ENCODE measurements at regions of chr13 and their contacts with region 1.

Region 1: GRCh38 chr13:21176220-21176982 is at the starts of genes MRPL57 and SKA3:
- DNase-seq: peak; percentile 84 to 91
- H3K4me3 ChIP-seq: peak within 1 kb of the TSS; percentile 84
- H3K27ac ChIP-seq: peak within 1 kb of the TSS; percentile 81
- H3K4me1 ChIP-seq: peaks cover 15% of the 10 kb centered on the region; the same call in 1 of the 2 replicates
- H3K27me3 ChIP-seq: no peaks in the 10 kb centered on the region
- CTCF ChIP-seq: no peak
- total RNA-seq, gene MRPL57: 11.0 TPM in 2 replicates
- total RNA-seq, gene SKA3: 12.5 and 18.9 TPM in 2 replicates

Region 2: GRCh38 chr13:20882206-20882605 is 294.2 kb before region 1 on chr13:
- CTCF ChIA-PET with region 1: no interaction called
- POLR2A ChIA-PET with region 1: no interaction called
- intact Hi-C with region 1: no loop called
- DNase-seq: no peak
- H3K4me3 ChIP-seq: no peak overlapping the region
- H3K27ac ChIP-seq: no peak overlapping the region
- H3K4me1 ChIP-seq: no peaks in the 10 kb centered on the region
- H3K27me3 ChIP-seq: no peaks in the 10 kb centered on the region
- CTCF ChIP-seq: no peak

Region 3: DNA sequence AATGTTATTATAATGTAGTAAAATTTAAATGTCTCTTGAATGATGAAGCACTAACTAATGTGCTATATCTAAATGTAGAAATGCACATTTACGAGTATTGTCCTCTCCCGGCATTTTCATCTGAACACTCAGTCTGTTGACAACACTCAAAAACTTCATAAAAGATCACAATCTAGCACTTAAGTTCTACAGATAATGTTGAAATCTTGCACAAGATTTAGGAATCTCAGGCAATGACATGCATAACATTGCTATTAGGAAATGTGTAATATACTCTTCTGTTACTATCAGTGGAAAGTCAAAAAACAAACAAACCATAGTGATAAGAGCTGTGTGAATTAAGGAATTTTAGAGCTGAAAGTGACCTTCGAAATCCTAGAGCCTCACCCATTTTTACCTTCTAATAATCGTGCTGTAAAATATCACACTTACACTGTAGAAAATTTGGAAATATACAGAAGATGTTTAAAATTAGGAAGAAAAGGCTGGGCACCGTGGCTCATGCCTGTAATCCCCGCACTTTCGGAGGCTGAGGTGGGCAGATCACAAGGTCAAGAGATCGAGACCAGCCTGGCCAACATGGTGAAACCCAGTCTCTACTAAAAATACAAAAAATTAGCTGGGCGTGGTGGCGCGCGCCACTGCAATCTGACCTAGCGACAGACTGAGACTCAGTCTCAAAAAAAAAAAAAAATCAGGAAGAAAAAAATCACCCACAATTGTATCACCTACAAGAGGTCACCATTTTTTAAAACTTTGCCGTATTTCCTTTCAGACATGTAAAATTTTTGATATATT is 236.1 kb before region 1 on chr13:
- CTCF ChIA-PET with region 1: interaction called, 4 read pairs
- POLR2A ChIA-PET with region 1: no interaction called
- intact Hi-C with region 1: loop called (anchors 1 kb)
- DNase-seq: peak in 1 of 2 experiments; percentile 76
- H3K4me3 ChIP-seq: no peak overlapping the region
- H3K27ac ChIP-seq: 0 out of 2 replicates have a peak overlapping the region, but pooled peaks have one; percentile 8
- H3K4me1 ChIP-seq: peaks cover 15% of the 10 kb centered on the region
- H3K27me3 ChIP-seq: no peaks in the 10 kb centered on the region
- CTCF ChIP-seq: no peak

Region 4: GRCh38 chr13:21060987-21061763 is 115.2 kb before region 1 on chr13 and contains the start of gene LATS2:
- CTCF ChIA-PET with region 1: no interaction called
- POLR2A ChIA-PET with region 1: no interaction called
- intact Hi-C with region 1: loop called (anchors 2 kb)
- DNase-seq: peak; percentile 78 to 90
- H3K4me3 ChIP-seq: peak within 1 kb of the TSS; percentile 79
- H3K27ac ChIP-seq: peak within 1 kb of the TSS; percentile 49
- H3K4me1 ChIP-seq: 0 out of 2 replicates have a peak, but pooled peaks cover 13% of the 10 kb centered on the region
- H3K27me3 ChIP-seq: no peaks in the 10 kb centered on the region
- CTCF ChIP-seq: no peak
- total RNA-seq, gene LATS2: 12.3 and 15.2 TPM in 2 replicates

Region 5: DNA sequence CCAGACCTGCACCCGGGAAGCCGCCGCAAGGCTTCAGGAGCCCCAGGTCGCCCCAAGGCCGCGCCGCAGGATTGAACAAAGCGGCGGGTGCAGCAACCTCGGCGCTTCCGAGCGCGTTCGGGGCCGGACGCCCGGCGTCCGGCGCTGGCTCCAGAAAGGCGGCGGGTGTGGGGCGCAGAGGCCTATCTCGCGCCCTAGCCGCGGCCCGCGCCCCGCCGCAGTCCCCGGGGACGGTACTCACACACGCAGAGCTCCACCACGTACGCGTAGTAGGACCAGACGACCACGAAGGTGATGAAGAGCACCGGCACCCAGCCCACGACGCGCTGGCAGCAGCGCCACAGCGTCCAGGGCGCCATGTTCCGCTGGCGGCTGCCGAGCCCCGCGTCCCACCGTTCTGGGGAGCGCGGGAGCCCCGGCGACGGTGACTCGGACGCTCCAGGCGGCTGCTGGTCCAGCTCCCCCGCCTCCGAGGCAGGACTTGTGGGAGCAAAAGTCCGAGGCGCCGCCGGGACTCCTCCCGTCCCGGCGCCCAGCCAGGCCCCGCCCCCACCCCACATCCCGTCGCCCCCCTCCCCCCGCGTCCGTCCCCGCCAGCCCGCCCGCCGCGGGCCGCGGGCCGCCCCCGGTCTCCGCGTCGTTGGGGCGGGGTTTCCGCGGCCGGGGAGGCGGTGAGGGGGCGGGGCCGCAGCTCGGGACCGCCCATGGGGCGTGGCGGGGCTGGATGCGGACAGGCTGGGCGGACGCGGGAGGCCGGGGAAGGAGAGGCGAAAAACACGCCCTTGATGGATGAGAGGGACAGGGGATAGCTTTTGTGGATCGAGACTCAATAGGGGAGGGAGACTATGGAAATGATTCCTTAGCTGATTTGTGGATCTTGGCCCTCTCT is 282.7 kb after region 1 on chr13 and contains the start of gene ZDHHC20:
- CTCF ChIA-PET with region 1: no interaction called
- POLR2A ChIA-PET with region 1: no interaction called
- intact Hi-C with region 1: loop called (anchors 5 kb)
- DNase-seq: peak; percentile 61 to 86
- H3K4me3 ChIP-seq: peak within 1 kb of the TSS; percentile 82
- H3K27ac ChIP-seq: peak within 1 kb of the TSS; percentile 60
- H3K4me1 ChIP-seq: peaks cover 23% of the 10 kb centered on the region
- H3K27me3 ChIP-seq: no peaks in the 10 kb centered on the region
- CTCF ChIP-seq: no peak
- total RNA-seq, gene ZDHHC20: 31.9 and 47.5 TPM in 2 replicates

Region 6: DNA sequence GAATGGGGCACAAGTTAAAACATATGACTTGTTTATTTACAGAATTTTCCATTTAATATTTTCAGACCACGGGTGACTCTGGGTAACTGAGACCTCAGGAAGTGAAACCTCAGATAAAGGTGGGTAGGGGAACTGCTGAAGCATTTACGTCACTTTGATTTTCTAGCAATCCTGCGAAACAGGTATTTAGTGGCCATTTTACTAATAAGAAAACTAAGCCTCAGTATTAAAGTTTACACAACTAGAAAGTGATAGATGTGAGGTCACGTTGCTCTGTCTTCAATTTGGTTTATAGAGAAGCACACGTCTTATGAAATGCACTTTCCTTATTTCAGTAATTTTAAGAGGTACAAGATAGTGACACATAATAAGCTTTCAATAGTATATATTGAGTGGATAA is 897.3 kb after region 1 on chr13:
- CTCF ChIA-PET with region 1: no interaction called
- POLR2A ChIA-PET with region 1: interaction called, 15 read pairs
- intact Hi-C with region 1: no loop called
- DNase-seq: no peak
- H3K4me3 ChIP-seq: no peak overlapping the region
- H3K27ac ChIP-seq: no peak overlapping the region
- H3K4me1 ChIP-seq: no peaks in the 10 kb centered on the region
- H3K27me3 ChIP-seq: peaks cover 10% of the 10 kb centered on the region; the same call in 1 of the 2 replicates
- CTCF ChIP-seq: no peak